Left colon (tissue), 2 donors: ENCODE measurements at regions of chr3 and their contacts with region 1.

Region 1: GRCh38 chr3:136250226-136250902 is at the start of gene PCCB:
- DNase-seq: peak; percentile 96
- ATAC-seq: peak; percentile 98
- total RNA-seq, gene PCCB: 53.0 to 59.1 TPM

Region 2: GRCh38 chr3:136070953-136071949 is 179.1 kb before region 1 on chr3:
- intact Hi-C with region 1: no loop called
- DNase-seq: no peak
- ATAC-seq: peak; percentile 39

Region 3: GRCh38 chr3:136109499-136109898 is 140.9 kb before region 1 on chr3:
- intact Hi-C with region 1: no loop called
- DNase-seq: no peak
- ATAC-seq: no peak

Region 4: GRCh38 chr3:136196401-136197158 is 53.8 kb before region 1 on chr3:
- intact Hi-C with region 1: loop called in 1 of 2 experiments (anchors 10 kb)
- DNase-seq: peak; percentile 99 to 100
- ATAC-seq: peak; percentile 77

Region 5: DNA sequence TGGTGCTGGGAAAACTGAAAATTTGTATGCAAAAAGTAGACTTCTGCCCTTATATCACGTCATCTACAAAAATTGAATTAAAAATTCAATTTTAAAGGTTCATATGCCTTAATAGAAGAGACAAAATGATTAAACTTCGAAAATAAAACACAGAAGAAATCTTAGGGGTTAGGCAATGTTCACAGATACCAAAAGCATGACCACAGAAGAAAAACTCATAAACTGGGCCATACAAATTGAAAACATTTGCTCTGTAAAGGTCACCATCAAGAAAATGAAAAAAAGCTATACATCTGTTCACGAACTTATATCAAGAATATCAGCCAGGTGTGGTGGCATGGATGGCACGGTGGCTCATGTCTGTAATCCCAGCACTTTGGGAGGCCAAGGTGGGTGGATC is 244.8 kb after region 1 on chr3:
- intact Hi-C with region 1: no loop called
- DNase-seq: no peak
- ATAC-seq: no peak